Thyroid gland (tissue), 4 donors: ENCODE measurements at regions of chr6 and their contacts with region 1.

Region 1: DNA sequence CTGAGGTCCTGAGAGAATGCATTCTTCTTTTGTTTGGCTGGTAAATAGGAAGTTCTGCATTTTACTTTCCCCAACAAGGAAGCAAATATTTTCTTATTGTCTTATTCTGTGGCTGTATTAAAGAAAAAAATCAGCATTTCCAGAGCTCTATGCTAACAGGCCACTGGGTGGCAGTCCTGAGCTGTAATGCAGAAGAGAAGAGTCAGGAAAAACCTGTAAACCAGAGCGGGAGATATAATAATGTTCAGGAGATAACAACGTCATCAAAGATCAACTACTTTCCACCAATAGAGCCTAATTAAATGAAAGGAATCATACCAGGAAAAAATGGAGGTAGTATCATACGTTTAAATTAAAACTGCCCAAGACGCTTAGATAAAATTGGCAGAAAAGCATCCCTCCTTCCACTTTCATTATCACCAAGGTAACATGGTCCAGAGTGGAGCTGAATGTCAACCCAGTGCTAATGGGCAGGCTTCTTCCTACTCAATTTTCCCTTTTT is 55.6 kb upstream of the CARMIL1 start:
- DNase-seq: peak; percentile 60 to 81
- H3K4me3 ChIP-seq: no peak overlapping the region
- H3K27ac ChIP-seq: peak overlapping the region in 1 of 3 donors; percentile 27
- H3K4me1 ChIP-seq: peaks cover 8 to 31% of the 10 kb centered on the region in 2 donors
- H3K27me3 ChIP-seq: no peaks in the 10 kb centered on the region
- CTCF ChIP-seq: peak; percentile 78 to 92 (median 88)
- POLR2A ChIP-seq: no peak

Region 2: GRCh38 chr6:25556516-25556915 is 333.0 kb after region 1 on chr6:
- intact Hi-C with region 1: loop called (anchors 10 kb)
- DNase-seq: peak; percentile 81 to 88
- H3K4me3 ChIP-seq: no peak overlapping the region
- H3K27ac ChIP-seq: no peak overlapping the region
- H3K4me1 ChIP-seq: no peaks in the 10 kb centered on the region
- H3K27me3 ChIP-seq: no peaks in the 10 kb centered on the region
- CTCF ChIP-seq: peak; percentile 65 to 84 (median 76)
- POLR2A ChIP-seq: no peak